ENCODE measurements at regions of chr3 and their contacts with region 1.

Region 1: GRCh38 chr3:2921903-2922302 is 188.3 kb downstream of the IL5RA start:
- DNase-seq: peak; percentile 32
- CTCF ChIP-seq: peak; percentile 48

Region 2: GRCh38 chr3:2896308-2896939 is 25.5 kb before region 1 on chr3:
- CTCF ChIA-PET with region 1: no interaction called
- POLR2A ChIA-PET with region 1: no interaction called
- DNase-seq: no peak
- CTCF ChIP-seq: no peak

Region 3: GRCh38 chr3:2908693-2909351 is 13.1 kb before region 1 on chr3:
- CTCF ChIA-PET with region 1: interaction called, 12 read pairs
- POLR2A ChIA-PET with region 1: no interaction called
- DNase-seq: no peak
- CTCF ChIP-seq: no peak

Region 4: DNA sequence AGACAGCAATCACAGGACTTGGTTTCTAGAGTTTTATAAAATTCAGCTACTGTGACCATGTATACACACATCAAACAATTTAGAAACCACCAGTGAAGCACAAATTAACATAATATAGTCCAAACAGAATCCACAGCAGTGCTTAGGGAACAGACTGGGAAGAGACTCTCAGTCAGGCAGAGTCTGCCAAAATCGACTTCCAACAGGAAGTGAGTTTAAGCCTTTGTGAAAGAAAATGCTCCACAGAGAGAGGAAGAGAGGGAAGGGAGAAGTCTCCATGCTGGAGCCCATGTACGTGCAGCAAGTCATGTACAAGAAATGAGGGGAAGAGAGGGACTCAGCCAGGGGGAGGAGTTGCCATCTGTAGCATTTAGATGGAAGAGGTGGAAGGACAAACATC is 15.7 kb after region 1 on chr3:
- CTCF ChIA-PET with region 1: interaction called, 18 read pairs
- POLR2A ChIA-PET with region 1: no interaction called
- DNase-seq: no peak
- CTCF ChIP-seq: no peak

Region 5: GRCh38 chr3:3065876-3066275 is 144.0 kb after region 1 on chr3:
- CTCF ChIA-PET with region 1: no interaction called
- POLR2A ChIA-PET with region 1: no interaction called
- DNase-seq: no peak
- CTCF ChIP-seq: no peak

Region 6: GRCh38 chr3:3160826-3161225 is 238.9 kb after region 1 on chr3:
- CTCF ChIA-PET with region 1: no interaction called
- POLR2A ChIA-PET with region 1: no interaction called
- DNase-seq: no peak
- CTCF ChIP-seq: no peak